Activated B cell treated with CpG ODN at 0.5 μM for 24 hours (primary cell): ENCODE measurements at regions of chr6 and their contacts with region 1.

Region 1: GRCh38 chr6:73329201-73329600 is 24.9 kb downstream of the DPPA5 start:
- DNase-seq: no peak
- ATAC-seq: no peak
- H3K4me3 Mint-ChIP-seq: no peak overlapping the region
- H3K27ac Mint-ChIP-seq: no peak overlapping the region
- H3K4me1 Mint-ChIP-seq: peaks cover 2% of the 10 kb centered on the region
- H3K27me3 Mint-ChIP-seq: peaks cover 26% of the 10 kb centered on the region
- CTCF ChIP-seq: no peak

Region 2: GRCh38 chr6:72411872-72412708 is 917.1 kb before region 1 on chr6:
- CTCF ChIA-PET with region 1: interaction called, 15 read pairs
- POLR2A ChIA-PET with region 1: no interaction called
- intact Hi-C with region 1: loop called (anchors 1 kb)
- DNase-seq: peak; percentile 67
- ATAC-seq: peak; percentile 99
- H3K4me3 Mint-ChIP-seq: no peak overlapping the region
- H3K27ac Mint-ChIP-seq: no peak overlapping the region
- H3K4me1 Mint-ChIP-seq: peaks cover 5% of the 10 kb centered on the region
- H3K27me3 Mint-ChIP-seq: peaks cover 20% of the 10 kb centered on the region
- CTCF ChIP-seq: peak; percentile 100

Region 3: DNA sequence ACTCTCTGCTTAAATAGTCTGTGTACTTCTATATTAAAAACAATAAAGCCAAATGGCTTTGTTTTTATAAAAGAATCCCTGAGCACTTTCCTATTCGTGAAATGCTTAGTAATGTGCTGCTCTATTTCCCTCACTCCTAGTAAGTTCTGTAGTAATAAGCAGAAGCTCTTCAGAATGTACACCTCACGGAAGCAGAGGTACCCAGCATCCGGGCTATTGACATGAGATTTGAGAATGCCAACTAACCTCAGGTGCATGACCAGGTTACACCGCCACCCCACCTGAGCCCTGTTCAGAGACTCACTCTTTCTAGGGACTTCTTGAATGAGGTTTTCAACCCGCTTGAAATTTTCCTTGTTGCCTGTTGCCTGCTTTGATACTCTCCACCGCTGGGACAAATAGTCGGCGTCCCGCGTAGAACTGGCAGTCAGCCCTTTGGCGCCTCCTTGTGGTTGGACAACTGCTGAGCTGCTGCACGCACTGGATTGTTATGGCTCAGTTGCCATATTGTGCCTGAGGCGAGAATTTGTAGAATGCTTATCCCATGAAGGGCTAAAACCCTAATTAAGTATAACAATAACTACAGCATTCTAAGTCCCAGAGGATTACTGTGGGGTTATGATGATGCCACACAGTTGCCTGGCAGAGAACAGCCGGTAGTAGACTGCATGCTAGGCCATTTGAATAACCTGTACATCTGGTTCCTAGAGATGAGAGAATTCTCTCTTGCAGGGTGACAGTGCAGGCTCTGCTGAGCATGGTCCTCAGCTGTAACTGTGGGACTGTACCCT is 199.4 kb before region 1 on chr6:
- CTCF ChIA-PET with region 1: interaction called, 5 read pairs
- POLR2A ChIA-PET with region 1: no interaction called
- intact Hi-C with region 1: loop called (anchors 1 kb)
- DNase-seq: peak; percentile 72
- ATAC-seq: peak; percentile 90
- H3K4me3 Mint-ChIP-seq: peak overlapping the region; percentile 33
- H3K27ac Mint-ChIP-seq: no peak overlapping the region
- H3K4me1 Mint-ChIP-seq: peaks cover 4% of the 10 kb centered on the region
- H3K27me3 Mint-ChIP-seq: no peaks in the 10 kb centered on the region
- CTCF ChIP-seq: peak; percentile 8

Region 4: GRCh38 chr6:73309769-73310502 is 19.3 kb before region 1 on chr6:
- CTCF ChIA-PET with region 1: interaction called, 7 read pairs
- POLR2A ChIA-PET with region 1: no interaction called
- intact Hi-C with region 1: loop called (anchors 1 kb)
- DNase-seq: peak; percentile 59
- ATAC-seq: peak; percentile 94
- H3K4me3 Mint-ChIP-seq: peak overlapping the region; percentile 97
- H3K27ac Mint-ChIP-seq: peak overlapping the region; percentile 87
- H3K4me1 Mint-ChIP-seq: peaks cover 18% of the 10 kb centered on the region
- H3K27me3 Mint-ChIP-seq: peaks cover 8% of the 10 kb centered on the region
- CTCF ChIP-seq: no peak